ENCODE measurements at regions of chr16 and their contacts with region 1.

Region 1: GRCh38 chr16:58515125-58515870 is at the start of gene SETD6:
- DNase-seq: peak; percentile 92 to 96
- ATAC-seq: peak; percentile 92 to 94 (median 93)
- H3K4me3 ChIP-seq: peak within 1 kb of the TSS; percentile 88
- H3K27ac ChIP-seq: peak within 1 kb of the TSS; percentile 91
- H3K4me1 ChIP-seq: peaks cover 7% of the 10 kb centered on the region
- H3K27me3 ChIP-seq: no peaks in the 10 kb centered on the region
- CTCF ChIP-seq: peak; percentile 36
- total RNA-seq, gene SETD6: 11.1 to 25.0 (median 18.4) TPM

Region 2: DNA sequence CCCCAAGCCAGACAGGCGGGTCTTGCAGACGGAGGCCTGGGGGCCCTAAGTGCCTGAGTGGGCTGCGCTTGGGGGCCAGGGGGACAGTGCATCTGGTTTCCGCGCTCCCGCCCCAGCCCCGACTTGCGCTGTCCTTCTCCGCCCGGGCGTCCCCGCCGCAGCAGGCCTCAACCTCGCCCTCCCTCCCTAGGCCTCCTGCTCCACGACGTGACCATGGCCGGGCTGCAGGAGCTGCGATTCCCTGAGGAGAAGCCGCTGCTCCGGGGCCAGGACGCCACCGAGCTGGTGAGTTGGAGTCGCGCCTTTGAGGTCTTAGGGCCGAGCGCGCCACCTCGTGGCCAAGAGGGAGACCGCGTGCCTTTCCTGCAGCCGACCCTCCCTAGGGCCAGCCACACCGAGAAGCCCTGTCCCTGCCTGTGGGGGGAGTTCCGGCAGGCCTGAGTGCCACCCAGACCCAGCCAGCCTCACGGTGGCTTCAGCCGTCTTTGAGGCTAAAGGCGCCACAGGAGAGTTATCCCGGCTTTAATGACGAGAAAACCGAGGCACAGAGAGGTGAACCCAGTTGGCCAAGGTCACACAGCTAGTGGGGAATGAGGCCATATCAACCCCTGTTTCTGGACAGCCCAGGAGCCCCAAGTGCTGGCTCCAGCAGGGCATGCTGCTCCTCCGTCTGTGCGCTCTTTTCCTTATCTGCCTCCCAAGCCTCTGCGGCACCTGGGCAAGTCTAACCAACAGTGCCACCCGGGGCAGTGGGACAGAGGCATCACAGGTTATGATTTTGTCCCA is 27.5 kb before region 1 on chr16:
- intact Hi-C with region 1: no loop called
- DNase-seq: peak; percentile 82 to 91
- ATAC-seq: peak; percentile 88 to 97 (median 92)
- H3K4me3 ChIP-seq: peak overlapping the region; percentile 26
- H3K27ac ChIP-seq: no peak overlapping the region
- H3K4me1 ChIP-seq: no peaks in the 10 kb centered on the region
- H3K27me3 ChIP-seq: no peaks in the 10 kb centered on the region
- CTCF ChIP-seq: peak; percentile 87

Region 3: GRCh38 chr16:58629572-58630104 is 114.3 kb after region 1 on chr16 and contains the start of gene CNOT1:
- intact Hi-C with region 1: loop called in 1 of 2 experiments (anchors 5 kb)
- DNase-seq: peak; percentile 98 to 99
- ATAC-seq: peak; percentile 91 to 96 (median 93)
- H3K4me3 ChIP-seq: peak within 1 kb of the TSS; percentile 96
- H3K27ac ChIP-seq: peak within 1 kb of the TSS; percentile 98
- H3K4me1 ChIP-seq: peaks cover 24% of the 10 kb centered on the region
- H3K27me3 ChIP-seq: no peaks in the 10 kb centered on the region
- CTCF ChIP-seq: no peak
- total RNA-seq, gene CNOT1: 70.9 to 112 (median 90.0) TPM

Region 4: GRCh38 chr16:58661199-58661830 is 146.0 kb after region 1 on chr16:
- intact Hi-C with region 1: loop called (anchors 5 kb)
- DNase-seq: peak; percentile 54 to 68
- ATAC-seq: peak; percentile 98 to 99 (median 99)
- H3K4me3 ChIP-seq: no peak overlapping the region
- H3K27ac ChIP-seq: no peak overlapping the region
- H3K4me1 ChIP-seq: no peaks in the 10 kb centered on the region
- H3K27me3 ChIP-seq: no peaks in the 10 kb centered on the region
- CTCF ChIP-seq: peak; percentile 59

Region 5: GRCh38 chr16:58733671-58734458 is 218.6 kb after region 1 on chr16 and contains the start of gene GOT2:
- intact Hi-C with region 1: loop called in 1 of 2 experiments (anchors 10 kb)
- DNase-seq: peak; percentile 81 to 89
- ATAC-seq: peak; percentile 95 to 96 (median 96)
- H3K4me3 ChIP-seq: peak within 1 kb of the TSS; percentile 93
- H3K27ac ChIP-seq: peak within 1 kb of the TSS; percentile 85
- H3K4me1 ChIP-seq: peaks cover 42% of the 10 kb centered on the region
- H3K27me3 ChIP-seq: no peaks in the 10 kb centered on the region
- CTCF ChIP-seq: peak; percentile 86
- total RNA-seq, gene GOT2: 183 to 396 (median 274) TPM

Measured in psoas muscle (tissue), 8 donors.